Endothelial cell of umbilical vein (primary cell): ENCODE measurements at regions of chr2 and their contacts with region 1.

Region 1: DNA sequence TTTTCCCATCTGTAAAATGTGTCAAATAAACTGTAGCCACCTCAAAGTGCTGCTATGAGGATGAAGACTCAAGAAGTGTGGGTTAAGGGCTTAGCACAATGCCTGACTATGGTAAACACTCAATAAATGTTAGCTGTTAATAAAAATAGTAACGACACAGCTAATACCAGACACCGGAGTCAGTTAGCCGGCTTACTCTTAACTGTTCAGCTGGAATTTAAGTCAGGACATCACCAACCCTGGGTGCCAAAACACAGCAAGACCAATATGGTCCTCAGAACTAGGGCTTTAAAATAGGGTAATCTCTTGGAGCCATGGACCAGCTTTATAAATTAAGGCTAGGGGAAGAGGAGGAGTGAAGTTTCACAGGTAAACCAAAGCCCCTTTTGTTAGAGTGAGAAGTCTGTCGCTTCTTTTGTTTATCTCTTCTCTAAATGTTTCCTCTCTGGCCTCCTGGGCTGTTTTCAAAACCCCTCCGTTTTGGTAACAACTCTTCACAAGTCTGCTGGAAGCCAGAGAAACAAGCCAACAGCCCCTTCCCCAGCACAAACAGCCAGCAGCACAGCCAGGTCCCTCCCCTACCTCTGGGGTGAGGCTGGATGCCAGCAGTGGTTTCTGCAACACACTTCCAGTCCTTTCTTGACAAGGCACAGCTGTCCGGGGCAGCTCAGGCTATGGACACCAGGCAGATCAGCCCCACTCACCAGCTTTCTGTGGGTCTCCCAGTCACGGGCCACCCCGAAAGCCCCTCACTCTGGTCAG is 13.8 kb upstream of the FZD7 start:
- DNase-seq: no peak
- H3K4me3 ChIP-seq: no peak overlapping the region
- H3K27ac ChIP-seq: no peak overlapping the region
- H3K4me1 ChIP-seq: no peaks in the 10 kb centered on the region
- H3K27me3 ChIP-seq: peaks cover 11 to 31% of the 10 kb centered on the region in 2 experiments
- CTCF ChIP-seq: no peak
- POLR2A ChIP-seq: no peak

Region 2: GRCh38 chr2:202005272-202005887 is 14.5 kb before region 1 on chr2:
- CTCF ChIA-PET with region 1: interaction called, 14 read pairs
- POLR2A ChIA-PET with region 1: no interaction called
- dilution Hi-C with region 1: no loop called
- intact Hi-C with region 1: no loop called
- DNase-seq: no peak
- H3K4me3 ChIP-seq: no peak overlapping the region
- H3K27ac ChIP-seq: no peak overlapping the region
- H3K4me1 ChIP-seq: no peaks in the 10 kb centered on the region
- H3K27me3 ChIP-seq: peaks cover 0 to 14% of the 10 kb centered on the region in 2 experiments
- CTCF ChIP-seq: no peak
- POLR2A ChIP-seq: no peak